Right cardiac atrium (tissue), 5 donors: ENCODE measurements at regions of chr17 and their contacts with region 1.

Region 1: GRCh38 chr17:2416010-2416734 is 15.3 kb upstream of the MNT start:
- DNase-seq: peak; percentile 86 to 96 (median 96)
- ATAC-seq: peak; percentile 78 to 82
- H3K4me3 ChIP-seq: no peak overlapping the region
- H3K27ac ChIP-seq: no peak overlapping the region
- H3K4me1 ChIP-seq: no peaks in the 10 kb centered on the region
- H3K27me3 ChIP-seq: no peaks in the 10 kb centered on the region

Region 2: DNA sequence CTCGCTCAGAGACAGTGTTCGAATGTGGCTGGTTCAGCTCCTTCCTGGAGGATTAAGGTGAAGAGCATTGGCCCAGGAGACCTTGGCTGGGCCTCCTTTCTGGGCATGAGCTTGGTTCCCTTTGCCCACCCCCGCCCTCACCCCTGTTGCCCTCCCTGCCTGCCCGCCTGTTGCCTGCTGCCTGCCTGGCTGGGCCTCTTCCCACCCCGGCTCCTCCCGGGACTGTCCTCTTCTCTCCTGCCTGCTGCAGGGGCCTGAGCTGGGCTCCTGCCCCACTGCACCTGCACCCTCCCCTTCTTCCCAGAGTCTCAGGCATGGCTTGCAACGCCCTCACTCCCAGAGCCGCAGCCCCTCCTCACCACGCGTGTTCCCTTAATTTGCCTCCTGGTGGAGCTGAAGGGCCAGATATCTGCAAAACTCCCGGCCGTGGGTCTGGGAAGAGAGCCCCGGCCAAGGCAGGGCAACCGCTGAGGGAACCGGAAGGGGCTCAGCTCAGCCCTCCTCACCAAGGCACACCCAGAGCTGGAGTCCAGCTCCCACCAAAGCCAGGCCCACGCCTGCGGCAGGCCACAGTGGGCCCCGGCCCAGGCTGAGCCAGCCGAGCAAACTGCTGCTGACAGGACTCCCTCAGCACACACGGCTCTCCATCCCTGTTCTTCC is 46.5 kb before region 1 on chr17:
- intact Hi-C with region 1: loop called in 1 of 4 experiments (anchors 10 kb)
- DNase-seq: peak in 2 of 3 donors; percentile 56 to 59
- ATAC-seq: peak; percentile 9 to 15
- H3K4me3 ChIP-seq: no peak overlapping the region
- H3K27ac ChIP-seq: no peak overlapping the region
- H3K4me1 ChIP-seq: no peaks in the 10 kb centered on the region
- H3K27me3 ChIP-seq: no peaks in the 10 kb centered on the region

Region 3: DNA sequence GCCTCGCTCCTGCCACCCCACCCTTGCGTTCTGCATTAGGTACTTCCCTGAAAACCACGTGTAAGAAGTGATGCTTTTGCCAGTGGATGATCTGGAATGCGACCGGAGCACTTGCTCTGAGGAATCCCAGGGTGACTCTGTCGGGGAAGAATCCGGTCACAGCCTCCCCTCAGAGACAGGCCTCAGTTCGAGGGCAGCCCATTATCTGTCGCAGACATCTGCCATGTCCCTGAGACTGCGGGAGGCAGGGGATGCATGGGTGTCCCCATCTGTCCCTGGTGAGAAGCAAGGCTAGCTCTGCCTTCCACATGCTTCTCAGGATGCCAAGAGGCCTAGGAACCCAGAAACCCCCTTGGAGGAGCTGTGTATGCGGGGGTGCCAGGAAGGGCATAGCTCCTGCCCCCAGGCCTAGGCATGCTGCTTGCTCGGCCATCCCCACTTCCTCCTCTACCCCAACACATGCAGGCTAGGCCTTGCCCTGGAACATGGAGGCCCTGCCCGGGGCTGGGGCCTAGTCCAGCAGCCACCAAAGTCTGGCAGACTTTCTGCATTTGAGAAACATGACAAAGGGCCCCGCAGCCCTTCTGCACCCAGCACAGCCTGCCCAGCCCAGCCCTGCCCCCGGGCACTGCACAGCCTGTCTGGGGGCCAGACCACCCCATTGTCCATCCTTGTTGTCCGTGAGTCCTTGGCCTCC is 35.8 kb before region 1 on chr17:
- intact Hi-C with region 1: loop called (anchors 2 to 5 kb)
- DNase-seq: no peak
- ATAC-seq: no peak
- H3K4me3 ChIP-seq: no peak overlapping the region
- H3K27ac ChIP-seq: no peak overlapping the region
- H3K4me1 ChIP-seq: no peaks in the 10 kb centered on the region
- H3K27me3 ChIP-seq: no peaks in the 10 kb centered on the region

Region 4: DNA sequence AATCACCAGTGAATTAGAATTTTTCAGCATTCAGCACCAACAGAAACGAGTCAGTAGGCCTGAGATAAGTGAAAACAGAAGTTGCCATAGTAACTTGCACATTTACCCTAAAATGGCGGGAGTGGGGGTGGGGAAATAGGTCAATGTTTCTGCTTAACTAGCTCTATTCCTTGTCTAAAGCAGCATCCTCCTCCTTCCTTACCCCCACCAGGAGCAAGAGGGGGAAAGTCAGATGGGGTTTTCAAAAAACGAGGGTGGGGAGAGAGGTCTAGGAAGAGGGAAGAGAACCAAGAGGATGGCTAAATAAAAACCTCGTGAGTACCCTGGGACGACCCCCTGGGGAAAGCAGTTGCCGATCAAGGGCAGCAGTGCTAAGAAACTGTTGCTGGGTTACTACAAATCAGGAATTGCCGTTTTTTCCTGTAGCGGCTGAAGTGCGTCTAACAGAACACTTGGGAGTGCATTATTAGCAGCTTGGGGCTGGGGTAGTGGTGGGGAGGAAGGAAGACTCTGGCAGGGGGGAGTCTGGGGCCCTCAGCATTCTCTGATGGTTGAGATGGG is 19.1 kb after region 1 on chr17:
- intact Hi-C with region 1: no loop called
- DNase-seq: no peak
- ATAC-seq: no peak
- H3K4me3 ChIP-seq: no peak overlapping the region
- H3K27ac ChIP-seq: no peak overlapping the region
- H3K4me1 ChIP-seq: no peaks in the 10 kb centered on the region
- H3K27me3 ChIP-seq: no peaks in the 10 kb centered on the region